ENCODE measurements at regions of chr4 and their contacts with region 1.

Region 1: GRCh38 chr4:46844325-46844917 is 64.6 kb downstream of the COX7B2 start:
- DNase-seq: peak; percentile 70
- H3K4me3 Mint-ChIP-seq: no peak overlapping the region
- H3K27ac Mint-ChIP-seq: no peak overlapping the region
- H3K4me1 Mint-ChIP-seq: no peaks in the 10 kb centered on the region
- H3K27me3 Mint-ChIP-seq: no peaks in the 10 kb centered on the region
- CTCF ChIP-seq: peak; percentile 52

Region 2: DNA sequence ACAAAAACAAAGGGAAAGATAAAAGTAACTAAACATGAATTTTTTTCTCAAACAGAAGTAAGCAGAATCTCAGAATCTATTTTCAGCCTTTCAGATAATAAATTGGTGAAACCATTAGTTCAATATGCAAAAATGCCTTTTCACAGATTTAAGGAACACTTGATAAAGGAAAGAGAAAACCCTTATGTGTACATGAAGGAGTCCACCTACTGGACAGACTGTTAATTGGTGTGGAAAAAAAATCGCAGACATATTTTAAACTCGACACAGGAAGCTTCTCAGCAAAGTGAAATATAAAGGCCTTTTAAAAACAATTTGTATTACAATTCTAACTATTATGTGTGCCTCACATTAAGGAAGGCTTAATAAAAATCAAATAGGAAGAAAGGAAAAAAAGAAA is 42.3 kb after region 1 on chr4:
- CTCF ChIA-PET with region 1: no interaction called
- POLR2A ChIA-PET with region 1: no interaction called
- intact Hi-C with region 1: loop called (anchors 1 kb)
- DNase-seq: peak; percentile 29
- H3K4me3 Mint-ChIP-seq: no peak overlapping the region
- H3K27ac Mint-ChIP-seq: no peak overlapping the region
- H3K4me1 Mint-ChIP-seq: no peaks in the 10 kb centered on the region
- H3K27me3 Mint-ChIP-seq: peaks cover 29% of the 10 kb centered on the region
- CTCF ChIP-seq: peak; percentile 28

Region 3: GRCh38 chr4:46931981-46932380 is 87.6 kb after region 1 on chr4:
- CTCF ChIA-PET with region 1: no interaction called
- POLR2A ChIA-PET with region 1: no interaction called
- intact Hi-C with region 1: no loop called
- DNase-seq: peak; percentile 59
- H3K4me3 Mint-ChIP-seq: no peak overlapping the region
- H3K27ac Mint-ChIP-seq: no peak overlapping the region
- H3K4me1 Mint-ChIP-seq: no peaks in the 10 kb centered on the region
- H3K27me3 Mint-ChIP-seq: peaks cover 93% of the 10 kb centered on the region
- CTCF ChIP-seq: peak; percentile 49

Region 4: DNA sequence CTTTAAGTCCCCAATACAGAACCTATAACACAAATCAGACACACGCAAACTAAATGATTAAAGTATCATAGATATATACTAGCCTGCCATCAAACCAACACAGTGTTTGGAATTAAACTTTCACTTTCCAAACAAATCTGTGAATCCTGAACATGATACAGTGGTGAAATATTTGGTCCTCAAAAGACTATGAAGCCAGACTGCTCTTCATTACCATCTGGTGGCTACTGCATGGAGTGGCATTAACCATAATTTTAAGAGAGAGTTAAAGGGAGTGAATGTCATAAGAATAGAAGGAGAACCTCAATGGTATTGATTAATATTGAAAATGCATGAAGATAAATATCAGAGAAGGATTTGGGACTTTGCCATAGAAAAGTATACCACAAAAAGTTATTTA is 158.2 kb after region 1 on chr4:
- CTCF ChIA-PET with region 1: interaction called, 3 read pairs
- POLR2A ChIA-PET with region 1: no interaction called
- intact Hi-C with region 1: loop called (anchors 1 kb)
- DNase-seq: peak; percentile 25
- H3K4me3 Mint-ChIP-seq: no peak overlapping the region
- H3K27ac Mint-ChIP-seq: no peak overlapping the region
- H3K4me1 Mint-ChIP-seq: no peaks in the 10 kb centered on the region
- H3K27me3 Mint-ChIP-seq: no peaks in the 10 kb centered on the region
- CTCF ChIP-seq: peak; percentile 19

Region 5: DNA sequence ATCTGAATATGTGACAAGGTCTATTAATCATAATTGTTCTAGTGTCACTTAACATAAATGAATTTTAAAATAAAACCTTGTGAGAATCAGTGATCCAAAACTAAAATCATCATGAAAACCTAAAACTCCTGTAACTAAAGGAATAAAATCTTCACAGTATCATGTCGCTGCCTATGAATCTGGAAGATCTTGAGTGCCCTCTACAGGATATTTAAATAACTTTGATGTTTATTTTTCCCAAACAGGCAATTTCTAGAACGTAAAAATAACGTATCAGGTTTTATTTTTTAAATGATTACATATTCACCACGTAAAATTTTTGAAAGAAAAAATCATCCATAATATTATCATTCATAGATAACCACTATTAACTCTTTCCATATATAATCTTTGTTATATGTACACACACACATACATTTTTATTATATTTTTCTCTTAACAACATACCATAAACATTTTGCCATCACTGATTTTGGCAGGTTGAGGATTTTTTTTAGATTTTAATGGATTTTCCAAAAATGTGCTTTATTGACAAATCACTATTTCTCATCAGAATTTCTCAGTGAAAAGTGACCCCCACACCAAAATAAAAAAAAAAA is 539.5 kb after region 1 on chr4:
- CTCF ChIA-PET with region 1: interaction called, 22 read pairs
- POLR2A ChIA-PET with region 1: no interaction called
- intact Hi-C with region 1: loop called (anchors 1 kb)
- DNase-seq: peak; percentile 45
- H3K4me3 Mint-ChIP-seq: no peak overlapping the region
- H3K27ac Mint-ChIP-seq: no peak overlapping the region
- H3K4me1 Mint-ChIP-seq: no peaks in the 10 kb centered on the region
- H3K27me3 Mint-ChIP-seq: peaks cover 39% of the 10 kb centered on the region
- CTCF ChIP-seq: peak; percentile 48

Measured in MCF 10A (cell line).